HepG2 (cell line): ENCODE measurements at regions of chr17 and their contacts with region 1.

Region 1: DNA sequence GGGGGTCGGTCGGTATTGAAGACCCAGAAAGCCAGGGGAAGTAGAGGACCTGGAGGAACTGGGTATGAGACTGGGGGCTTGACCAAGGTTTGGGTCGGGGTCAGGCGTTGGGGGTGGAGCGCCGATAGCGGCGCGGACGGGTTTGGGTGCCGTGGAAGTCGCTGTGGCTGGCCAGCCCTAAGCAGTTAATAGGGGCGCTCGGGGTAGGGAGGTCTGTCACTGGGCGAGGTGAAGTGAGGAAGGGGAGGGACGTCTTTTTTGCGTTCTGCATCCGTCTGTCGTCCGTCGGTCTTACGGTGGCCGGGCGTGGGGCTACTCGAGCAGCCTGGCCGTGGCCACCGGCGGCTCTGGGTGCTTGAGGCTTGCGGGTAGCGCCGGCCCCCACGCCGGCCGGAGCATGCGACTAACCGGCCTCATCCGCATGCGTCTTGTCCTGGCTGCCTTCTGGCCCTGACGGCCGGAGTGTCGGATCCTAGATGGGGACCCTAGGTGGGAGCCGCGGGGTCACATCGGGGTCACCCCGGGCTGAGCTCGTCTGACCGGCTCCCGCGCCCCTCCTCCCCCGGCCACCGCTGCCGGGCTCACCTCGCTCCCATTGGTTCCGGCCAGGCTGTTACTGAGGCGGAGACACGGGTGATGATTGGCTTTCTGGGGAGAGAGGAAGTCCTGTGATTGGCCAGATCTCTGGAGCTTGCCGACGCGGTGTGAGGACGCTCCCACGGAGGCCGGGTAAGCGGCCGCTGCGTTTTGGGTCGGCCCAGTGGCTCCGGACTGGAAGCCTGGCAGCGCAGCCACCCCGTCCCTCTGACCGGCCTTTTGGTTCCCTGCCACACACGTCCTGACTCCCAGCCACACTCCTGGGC is 10.3 kb upstream of the TMEM88 start:
- DNase-seq: peak; percentile 92
- ATAC-seq: peak; percentile 80
- H3K4me3 ChIP-seq: peak overlapping the region; percentile 83 to 95 (median 86)
- H3K27ac ChIP-seq: peak overlapping the region; percentile 97
- H3K4me1 ChIP-seq: peaks cover 28% of the 10 kb centered on the region
- H3K27me3 ChIP-seq: peaks cover 0 to 3% of the 10 kb centered on the region in 2 experiments; a peak in 1 of 5 replicates
- CTCF ChIP-seq: no peak
- EP300 ChIP-seq: no peak
- POLR2A ChIP-seq: peak; percentile 37 to 63; a peak in 3 of 4 replicates
- RAD21 ChIP-seq: peak; percentile 60

Region 2: GRCh38 chr17:7572588-7573323 is 271.8 kb before region 1 on chr17:
- CTCF ChIA-PET with region 1: no interaction called
- POLR2A ChIA-PET with region 1: no interaction called
- in situ Hi-C with region 1: loop called (anchors 10 kb)
- intact Hi-C with region 1: no loop called
- DNase-seq: peak; percentile 98
- ATAC-seq: no peak; the same call in 2 of the 3 replicates
- H3K4me3 ChIP-seq: peak overlapping the region; percentile 89 to 96 (median 94)
- H3K27ac ChIP-seq: peak overlapping the region; percentile 93
- H3K4me1 ChIP-seq: peaks cover 51% of the 10 kb centered on the region
- H3K27me3 ChIP-seq: no peaks in the 10 kb centered on the region; a peak in 1 of 5 replicates
- CTCF ChIP-seq: 0 out of 2 replicates have a peak, but pooled peaks have one; percentile 2
- EP300 ChIP-seq: no peak
- POLR2A ChIP-seq: peak; percentile 96 to 98
- RAD21 ChIP-seq: no peak; the same call in none of the 2 replicates

Region 3: GRCh38 chr17:7745748-7746470 is 98.6 kb before region 1 on chr17:
- CTCF ChIA-PET with region 1: no interaction called
- POLR2A ChIA-PET with region 1: no interaction called
- in situ Hi-C with region 1: no loop called
- intact Hi-C with region 1: no loop called
- DNase-seq: peak; percentile 61
- ATAC-seq: peak; percentile 54
- H3K4me3 ChIP-seq: no peak overlapping the region
- H3K27ac ChIP-seq: no peak overlapping the region
- H3K4me1 ChIP-seq: peaks cover 37% of the 10 kb centered on the region
- H3K27me3 ChIP-seq: peaks cover 0 to 16% of the 10 kb centered on the region in 2 experiments; a peak in 3 of 5 replicates
- CTCF ChIP-seq: no peak
- EP300 ChIP-seq: no peak
- POLR2A ChIP-seq: no peak
- RAD21 ChIP-seq: no peak

Region 4: DNA sequence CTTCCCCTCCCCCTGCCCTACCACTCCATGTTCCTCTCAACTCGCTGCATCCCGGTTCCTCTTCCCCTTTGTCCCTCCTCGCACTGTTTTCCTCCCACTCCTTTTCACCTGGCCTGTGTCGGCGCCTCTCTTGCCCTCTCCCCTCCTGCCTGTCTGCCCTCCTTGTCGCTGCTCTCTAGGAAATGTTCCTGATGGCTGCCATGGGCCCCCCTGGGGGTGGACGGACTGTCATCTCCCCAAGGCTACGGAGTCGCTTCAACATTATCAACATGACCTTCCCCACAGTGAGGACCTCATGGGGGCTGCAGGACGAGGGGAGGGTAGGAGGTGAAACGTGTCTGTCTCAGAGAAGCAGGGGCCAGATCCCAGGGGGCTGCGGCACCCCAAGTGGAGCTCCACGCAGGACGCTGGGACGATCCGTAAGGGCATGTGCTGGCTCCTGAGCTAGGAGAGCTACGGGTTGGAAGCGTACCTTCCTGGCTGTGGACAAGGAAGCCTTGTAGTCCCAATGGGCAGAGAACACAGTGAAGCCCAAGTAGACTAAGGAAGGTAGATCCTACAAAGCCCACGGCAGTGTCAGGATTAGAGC is 50.4 kb before region 1 on chr17:
- CTCF ChIA-PET with region 1: no interaction called
- POLR2A ChIA-PET with region 1: no interaction called
- in situ Hi-C with region 1: no loop called
- intact Hi-C with region 1: no loop called
- DNase-seq: no peak
- ATAC-seq: no peak
- H3K4me3 ChIP-seq: no peak overlapping the region
- H3K27ac ChIP-seq: no peak overlapping the region
- H3K4me1 ChIP-seq: no peaks in the 10 kb centered on the region
- H3K27me3 ChIP-seq: peaks cover 4 to 56% of the 10 kb centered on the region in 2 experiments; a peak in 4 of 5 replicates
- CTCF ChIP-seq: no peak
- EP300 ChIP-seq: no peak
- POLR2A ChIP-seq: no peak
- RAD21 ChIP-seq: no peak

Region 5: GRCh38 chr17:7856883-7857723 is 12.6 kb after region 1 on chr17 and contains the start of gene NAA38:
- CTCF ChIA-PET with region 1: no interaction called
- POLR2A ChIA-PET with region 1: interaction called, 104 read pairs
- in situ Hi-C with region 1: no loop called
- intact Hi-C with region 1: no loop called
- DNase-seq: peak; percentile 99
- ATAC-seq: peak; percentile 90
- H3K4me3 ChIP-seq: peak within 1 kb of the TSS; percentile 70 to 83 (median 83)
- H3K27ac ChIP-seq: peak within 1 kb of the TSS; percentile 94
- H3K4me1 ChIP-seq: peaks cover 48% of the 10 kb centered on the region
- H3K27me3 ChIP-seq: no peaks in the 10 kb centered on the region; a peak in 1 of 5 replicates
- CTCF ChIP-seq: peak; percentile 91
- EP300 ChIP-seq: 0 out of 4 replicates have a peak, but pooled peaks of 1 of the 2 experiments have one; percentile 29
- POLR2A ChIP-seq: peak; percentile 57 to 77; a peak in 3 of 4 replicates
- RAD21 ChIP-seq: peak; percentile 78
- total RNA-seq, gene NAA38: 91.6 and 105 TPM in 2 replicates

Region 6: DNA sequence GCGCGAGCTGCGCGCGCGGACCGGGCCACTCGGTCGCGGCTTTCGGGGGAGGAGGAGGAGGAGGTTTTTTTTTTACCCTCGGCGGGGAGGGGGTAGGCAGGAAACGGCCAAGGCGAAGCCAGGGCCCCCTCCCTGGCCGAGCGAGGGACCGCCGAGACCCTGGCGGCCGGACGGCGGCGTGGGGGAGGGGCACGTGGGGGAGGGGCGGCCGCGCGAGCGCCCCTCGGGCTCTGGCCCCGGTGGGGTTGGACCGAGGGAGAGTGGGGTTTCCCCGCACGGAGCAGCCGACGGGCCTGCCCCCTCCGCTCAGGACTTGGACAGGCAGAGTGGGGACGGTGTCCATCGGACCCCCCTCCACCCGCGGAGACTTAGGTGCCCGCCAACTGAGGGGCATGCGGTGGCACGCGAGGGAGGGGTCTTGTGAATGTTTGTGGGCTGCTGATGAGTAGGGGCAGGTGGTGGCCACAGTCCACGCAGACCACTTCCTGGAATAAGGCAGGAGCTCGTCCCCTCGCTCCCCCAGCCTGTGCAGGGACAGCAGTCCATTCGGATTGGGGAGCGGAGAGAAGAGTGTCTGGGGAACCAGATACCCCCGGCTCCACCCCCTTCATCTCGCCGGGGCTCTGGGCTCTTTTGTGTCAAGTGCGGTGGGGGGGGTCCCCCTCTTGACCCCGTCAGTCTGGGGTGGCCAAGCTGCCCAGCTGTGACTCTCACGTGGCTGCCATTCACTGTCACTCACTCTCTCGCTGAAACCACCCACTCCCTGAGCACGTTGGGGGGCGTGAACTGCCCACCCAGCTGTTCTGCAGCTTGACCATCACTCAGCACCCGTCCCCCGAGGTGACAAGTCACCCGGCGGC is 41.1 kb after region 1 on chr17:
- CTCF ChIA-PET with region 1: no interaction called
- POLR2A ChIA-PET with region 1: no interaction called
- in situ Hi-C with region 1: no loop called
- intact Hi-C with region 1: no loop called
- DNase-seq: no peak
- ATAC-seq: peak; percentile 23; the same call in 2 of the 3 replicates
- H3K4me3 ChIP-seq: peak overlapping the region; percentile 45 to 76 (median 68)
- H3K27ac ChIP-seq: peak overlapping the region; percentile 39
- H3K4me1 ChIP-seq: peaks cover 50% of the 10 kb centered on the region
- H3K27me3 ChIP-seq: peaks cover 1 to 22% of the 10 kb centered on the region in 2 experiments; a peak in 2 of 5 replicates
- CTCF ChIP-seq: peak; percentile 7; the same call in 1 of the 2 replicates
- EP300 ChIP-seq: no peak
- POLR2A ChIP-seq: no peak
- RAD21 ChIP-seq: no peak

Region 7: DNA sequence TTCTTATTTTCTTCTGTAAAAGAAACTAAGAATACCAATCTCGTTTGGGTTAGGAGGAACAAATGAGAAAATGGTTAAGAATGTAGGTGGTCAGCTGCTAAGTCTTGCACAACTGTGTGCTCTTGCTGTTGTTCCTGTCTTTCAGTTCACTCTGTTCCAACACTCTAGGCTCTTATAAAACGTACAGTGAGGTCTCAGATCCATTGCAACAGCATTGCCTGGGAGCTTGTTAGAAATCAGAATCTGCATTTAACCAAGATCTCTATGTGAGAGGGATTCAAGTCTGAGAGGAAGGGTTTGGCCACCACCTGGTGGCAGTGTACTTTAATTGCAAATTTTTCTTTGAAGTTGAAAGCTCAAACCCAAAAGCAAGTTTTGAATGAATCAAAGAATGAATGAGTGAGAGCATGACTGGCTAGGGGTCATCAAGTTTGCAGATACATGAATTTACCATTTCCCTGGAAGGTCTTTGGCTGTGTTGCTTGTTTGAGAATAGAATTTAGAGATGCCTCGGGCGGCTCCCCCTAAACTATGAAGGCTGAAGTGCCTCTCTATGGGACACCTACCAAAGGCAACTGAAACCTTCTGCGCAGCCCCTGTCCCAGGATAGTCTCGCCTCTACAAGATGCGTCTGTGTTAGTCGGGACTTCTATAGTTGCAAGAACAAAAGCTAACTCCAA is 196.9 kb after region 1 on chr17:
- CTCF ChIA-PET with region 1: no interaction called
- POLR2A ChIA-PET with region 1: no interaction called
- in situ Hi-C with region 1: no loop called
- intact Hi-C with region 1: loop called (anchors 5 kb)
- DNase-seq: peak; percentile 49
- ATAC-seq: peak; percentile 51
- H3K4me3 ChIP-seq: no peak overlapping the region
- H3K27ac ChIP-seq: no peak overlapping the region
- H3K4me1 ChIP-seq: peaks cover 16% of the 10 kb centered on the region; the same call in 1 of the 2 replicates
- H3K27me3 ChIP-seq: peaks cover 4 to 53% of the 10 kb centered on the region in 2 experiments; a peak in 3 of 5 replicates
- CTCF ChIP-seq: peak; percentile 72
- EP300 ChIP-seq: no peak
- POLR2A ChIP-seq: no peak
- RAD21 ChIP-seq: peak; percentile 67; the same call in 1 of the 2 replicates